Caco-2 (cell line): ENCODE measurements at regions of chr1 and their contacts with region 1.

Region 1: GRCh38 chr1:160085686-160086455 is 4.5 kb downstream of the KCNJ9 start:
- DNase-seq: peak; percentile 72 to 82
- H3K4me3 ChIP-seq: no peak overlapping the region
- H3K4me3 Mint-ChIP-seq: no peak overlapping the region
- H3K27ac Mint-ChIP-seq: no peak overlapping the region
- H3K4me1 ChIP-seq: no peaks in the 10 kb centered on the region
- H3K4me1 Mint-ChIP-seq: peaks cover 7% of the 10 kb centered on the region
- H3K27me3 ChIP-seq: no peaks in the 10 kb centered on the region
- H3K27me3 Mint-ChIP-seq: peaks cover 8% of the 10 kb centered on the region
- CTCF ChIP-seq: peak; percentile 82 to 87

Region 2: DNA sequence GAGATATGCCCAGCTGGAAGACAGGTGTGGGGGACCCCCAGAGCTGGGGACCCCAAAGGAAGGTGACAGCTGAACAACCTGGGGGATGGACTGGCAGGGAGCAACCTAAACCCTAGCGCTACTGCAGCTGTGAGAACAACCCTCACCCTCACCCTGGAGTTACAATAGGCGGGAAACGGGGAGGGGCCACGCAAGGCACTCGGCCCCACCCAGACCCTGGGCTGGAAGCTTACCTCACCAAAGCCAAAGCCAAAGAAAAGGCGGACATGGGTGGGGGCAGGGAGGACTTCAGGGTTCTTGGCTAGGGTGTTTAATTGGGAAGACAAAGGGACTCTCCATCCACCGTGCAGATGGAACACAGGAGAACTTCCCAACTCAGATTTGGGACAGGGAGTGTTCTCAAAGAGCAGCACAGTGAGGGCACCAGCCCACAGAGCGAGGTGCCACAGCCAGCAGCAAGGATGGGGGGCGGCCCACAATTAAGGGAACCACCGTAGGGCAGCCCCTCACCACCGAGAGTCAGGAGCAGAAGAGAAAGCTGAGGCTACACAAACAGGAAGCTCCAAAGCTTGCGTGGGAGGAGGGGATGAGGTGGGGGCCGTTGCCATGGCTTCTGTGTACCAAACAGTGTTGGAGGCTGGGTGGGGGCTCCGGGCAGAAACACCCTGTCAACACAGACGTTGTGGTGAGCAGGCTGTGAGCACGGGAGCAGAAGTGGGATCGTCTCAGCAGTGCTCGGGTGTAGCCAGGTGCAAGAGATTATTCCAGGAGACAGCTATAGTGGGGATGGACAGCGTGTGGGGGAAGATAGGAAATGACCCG is 162.5 kb before region 1 on chr1:
- CTCF ChIA-PET with region 1: no interaction called
- POLR2A ChIA-PET with region 1: no interaction called
- intact Hi-C with region 1: no loop called
- DNase-seq: peak in 1 of 2 experiments; percentile 62
- H3K4me3 ChIP-seq: peak overlapping the region; percentile 63
- H3K4me3 Mint-ChIP-seq: peak overlapping the region; percentile 74
- H3K27ac Mint-ChIP-seq: peak overlapping the region; percentile 98
- H3K4me1 ChIP-seq: peaks cover 53% of the 10 kb centered on the region
- H3K4me1 Mint-ChIP-seq: peaks cover 45% of the 10 kb centered on the region
- H3K27me3 ChIP-seq: no peaks in the 10 kb centered on the region
- H3K27me3 Mint-ChIP-seq: no peaks in the 10 kb centered on the region
- CTCF ChIP-seq: no peak

Region 3: GRCh38 chr1:160128194-160128523 is 42.3 kb after region 1 on chr1:
- CTCF ChIA-PET with region 1: no interaction called
- POLR2A ChIA-PET with region 1: no interaction called
- intact Hi-C with region 1: no loop called
- DNase-seq: no peak
- H3K4me3 ChIP-seq: no peak overlapping the region
- H3K4me3 Mint-ChIP-seq: no peak overlapping the region
- H3K27ac Mint-ChIP-seq: peak overlapping the region; percentile 61
- H3K4me1 ChIP-seq: peaks cover 26% of the 10 kb centered on the region
- H3K4me1 Mint-ChIP-seq: peaks cover 31% of the 10 kb centered on the region
- H3K27me3 ChIP-seq: no peaks in the 10 kb centered on the region
- H3K27me3 Mint-ChIP-seq: no peaks in the 10 kb centered on the region
- CTCF ChIP-seq: no peak

Region 4: DNA sequence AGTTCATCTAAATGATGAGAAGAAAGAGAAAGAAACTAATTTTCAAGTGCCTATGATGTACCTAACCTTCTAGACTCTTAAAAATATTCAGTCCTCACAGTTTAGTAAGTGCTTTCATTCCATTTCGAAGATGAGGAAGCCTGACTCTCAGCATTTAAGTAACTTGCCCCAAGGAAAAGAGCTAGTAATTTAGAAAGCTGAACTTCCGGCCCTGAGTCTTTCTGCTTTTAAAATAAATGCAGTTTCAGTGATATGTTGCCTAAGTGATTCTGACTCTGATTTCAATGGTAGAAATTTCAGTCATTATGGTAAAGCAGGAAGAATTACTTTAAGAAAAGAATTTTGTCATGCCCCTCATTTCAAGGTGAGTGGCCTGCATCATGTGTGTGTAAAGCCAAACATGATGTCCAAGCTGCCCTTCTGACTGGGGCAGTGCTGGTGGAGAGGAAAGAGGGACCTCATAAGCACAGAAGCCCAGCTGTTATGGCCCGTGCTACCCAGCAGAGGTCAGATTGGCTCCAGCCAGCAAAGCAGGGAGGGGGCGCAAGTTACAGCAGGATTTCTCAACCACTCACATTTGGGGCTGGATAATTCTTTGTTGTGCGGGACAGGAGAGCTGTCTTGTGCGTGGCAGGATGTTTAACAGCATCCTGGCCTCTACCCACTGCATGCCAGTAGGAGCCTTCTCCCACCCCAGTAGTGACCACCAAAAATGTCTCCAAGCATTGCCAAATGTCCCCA is 76.3 kb after region 1 on chr1:
- CTCF ChIA-PET with region 1: no interaction called
- POLR2A ChIA-PET with region 1: no interaction called
- intact Hi-C with region 1: loop called (anchors 1 kb)
- DNase-seq: peak in 1 of 2 experiments; percentile 40
- H3K4me3 ChIP-seq: no peak overlapping the region
- H3K4me3 Mint-ChIP-seq: no peak overlapping the region
- H3K27ac Mint-ChIP-seq: no peak overlapping the region
- H3K4me1 ChIP-seq: peaks cover 16% of the 10 kb centered on the region; the same call in 1 of the 2 replicates
- H3K4me1 Mint-ChIP-seq: no peaks in the 10 kb centered on the region
- H3K27me3 ChIP-seq: no peaks in the 10 kb centered on the region
- H3K27me3 Mint-ChIP-seq: peaks cover 2% of the 10 kb centered on the region
- CTCF ChIP-seq: peak; percentile 41 to 61

Region 5: GRCh38 chr1:160219062-160219929 is 133.4 kb after region 1 on chr1:
- CTCF ChIA-PET with region 1: interaction called, 14 read pairs
- POLR2A ChIA-PET with region 1: no interaction called
- intact Hi-C with region 1: no loop called
- DNase-seq: peak; percentile 62 to 69
- H3K4me3 ChIP-seq: no peak overlapping the region
- H3K4me3 Mint-ChIP-seq: no peak overlapping the region
- H3K27ac Mint-ChIP-seq: no peak overlapping the region
- H3K4me1 ChIP-seq: 0 out of 2 replicates have a peak, but pooled peaks cover 6% of the 10 kb centered on the region
- H3K4me1 Mint-ChIP-seq: peaks cover 9% of the 10 kb centered on the region
- H3K27me3 ChIP-seq: no peaks in the 10 kb centered on the region
- H3K27me3 Mint-ChIP-seq: no peaks in the 10 kb centered on the region
- CTCF ChIP-seq: peak; percentile 62 to 67